Activated CD4-positive, alpha-beta T cell treated with anti-CD3 and anti-CD28 coated beads for 36 hours (primary cell): ENCODE measurements at regions of chr7 and their contacts with region 1.

Region 1: GRCh38 chr7:143948733-143949132 is 5.9 kb upstream of the OR2F1 start:
- DNase-seq: no peak
- ATAC-seq: no peak
- H3K4me3 Mint-ChIP-seq: no peak overlapping the region
- H3K27ac Mint-ChIP-seq: no peak overlapping the region
- H3K4me1 Mint-ChIP-seq: no peaks in the 10 kb centered on the region
- H3K27me3 Mint-ChIP-seq: peaks cover 31% of the 10 kb centered on the region

Region 2: DNA sequence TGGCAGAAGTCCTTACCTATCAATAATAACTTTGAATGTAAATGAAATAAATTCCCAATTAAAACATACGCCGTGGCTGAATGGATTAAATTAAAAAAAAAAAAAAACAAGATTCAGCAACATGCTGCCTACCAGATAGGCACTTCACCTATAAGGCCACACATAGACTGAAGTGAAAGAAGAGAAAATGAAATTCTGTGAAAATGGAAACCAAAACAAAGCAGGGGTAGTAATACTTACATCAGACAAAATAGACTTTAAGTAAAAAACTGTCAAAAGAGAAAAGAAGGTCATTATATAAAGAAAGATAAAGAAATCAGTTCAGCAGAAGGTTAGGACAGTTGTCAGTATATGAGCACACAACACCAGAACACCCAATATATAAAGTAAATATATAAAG is 102.0 kb before region 1 on chr7:
- CTCF ChIA-PET with region 1: no interaction called
- POLR2A ChIA-PET with region 1: no interaction called
- intact Hi-C with region 1: no loop called
- DNase-seq: no peak
- ATAC-seq: peak; percentile 65
- H3K4me3 Mint-ChIP-seq: no peak overlapping the region
- H3K27ac Mint-ChIP-seq: no peak overlapping the region
- H3K4me1 Mint-ChIP-seq: no peaks in the 10 kb centered on the region
- H3K27me3 Mint-ChIP-seq: no peaks in the 10 kb centered on the region

Region 3: DNA sequence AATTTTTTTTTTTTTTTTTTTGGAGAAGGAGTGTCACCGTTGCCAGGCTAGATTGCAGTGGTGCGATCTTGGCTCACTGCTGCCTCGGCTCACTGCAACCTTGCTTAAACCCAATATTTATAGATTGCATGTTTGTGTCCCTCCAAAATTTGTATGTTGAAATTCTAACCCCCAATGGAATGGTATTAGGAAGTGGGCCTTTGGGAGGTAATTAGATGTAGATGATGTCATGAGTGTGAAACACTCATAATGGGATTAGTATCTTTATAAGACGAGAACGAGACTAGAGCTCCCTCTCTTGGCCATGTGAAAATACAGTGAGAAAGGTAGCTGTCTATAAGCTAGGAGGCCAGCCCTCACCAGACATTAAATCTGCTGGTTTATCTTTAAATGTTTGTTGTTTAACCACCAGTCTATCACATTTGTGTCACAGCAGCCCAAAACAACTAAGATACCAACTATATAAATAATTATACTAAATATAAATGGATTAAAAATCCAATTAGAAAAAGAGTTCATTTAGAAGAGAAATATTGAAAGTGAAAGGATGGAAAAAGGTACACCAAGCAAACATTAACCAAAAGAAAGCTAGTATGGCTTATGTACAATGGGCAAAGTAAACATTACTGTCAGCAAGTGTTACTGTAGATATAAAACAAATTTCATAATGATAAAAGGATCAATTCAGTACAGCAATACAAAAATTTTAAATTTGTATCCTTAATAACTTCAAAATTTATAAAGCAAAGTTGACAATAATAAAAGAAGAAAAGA is 56.0 kb before region 1 on chr7:
- CTCF ChIA-PET with region 1: no interaction called
- POLR2A ChIA-PET with region 1: no interaction called
- intact Hi-C with region 1: no loop called
- DNase-seq: no peak
- ATAC-seq: peak; percentile 75
- H3K4me3 Mint-ChIP-seq: no peak overlapping the region
- H3K27ac Mint-ChIP-seq: no peak overlapping the region
- H3K4me1 Mint-ChIP-seq: no peaks in the 10 kb centered on the region
- H3K27me3 Mint-ChIP-seq: peaks cover 5% of the 10 kb centered on the region

Region 4: DNA sequence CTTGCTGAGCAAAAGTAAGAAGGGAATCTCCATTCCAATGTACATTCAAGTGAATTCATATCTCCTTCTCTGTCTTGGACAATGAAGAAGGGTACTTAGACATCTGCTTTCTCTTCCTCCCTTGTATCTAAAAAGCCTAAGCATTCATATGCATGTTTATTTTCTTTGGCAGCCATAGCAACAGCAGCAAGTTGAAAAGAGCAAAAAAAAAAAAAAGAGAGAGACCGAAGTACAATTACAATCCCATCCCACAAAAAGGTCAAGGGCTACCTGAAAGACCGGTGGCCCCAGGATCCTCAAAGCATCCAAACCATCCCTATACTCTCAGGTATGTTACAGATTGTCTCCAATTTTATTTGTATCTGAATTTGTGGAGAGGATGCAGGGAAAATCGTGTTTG is 10.0 kb after region 1 on chr7:
- CTCF ChIA-PET with region 1: interaction called, 3 read pairs
- POLR2A ChIA-PET with region 1: no interaction called
- intact Hi-C with region 1: loop called in 1 of 2 experiments (anchors 1 kb)
- DNase-seq: no peak
- ATAC-seq: no peak
- H3K4me3 Mint-ChIP-seq: no peak overlapping the region
- H3K27ac Mint-ChIP-seq: no peak overlapping the region
- H3K4me1 Mint-ChIP-seq: no peaks in the 10 kb centered on the region
- H3K27me3 Mint-ChIP-seq: peaks cover 27% of the 10 kb centered on the region